ENCODE measurements at regions of chr2 and their contacts with region 1.

Region 1: GRCh38 chr2:191245046-191245868 is at the start of gene MYO1B:
- DNase-seq: peak; percentile 88
- H3K4me3 Mint-ChIP-seq: peak within 1 kb of the TSS; percentile 88
- H3K27ac Mint-ChIP-seq: peak within 1 kb of the TSS; percentile 77
- H3K4me1 Mint-ChIP-seq: peaks cover 17% of the 10 kb centered on the region
- H3K27me3 Mint-ChIP-seq: peaks cover 21% of the 10 kb centered on the region
- total RNA-seq, gene MYO1B: 16.4 and 21.1 TPM in 2 replicates

Region 2: GRCh38 chr2:191376981-191377629 is 131.8 kb after region 1 on chr2:
- intact Hi-C with region 1: loop called (anchors 10 kb)
- DNase-seq: no peak
- H3K4me3 Mint-ChIP-seq: no peak overlapping the region
- H3K27ac Mint-ChIP-seq: no peak overlapping the region
- H3K4me1 Mint-ChIP-seq: peaks cover 14% of the 10 kb centered on the region
- H3K27me3 Mint-ChIP-seq: no peaks in the 10 kb centered on the region

Measured in activated CD4-positive, alpha-beta T cell treated with anti-CD3 and anti-CD28 coated beads, Interleukin-2, amount 10 ng/mL, durations not matched to agents 24 days and 14 days (primary cell).